Psoas muscle (tissue), 8 donors: ENCODE measurements at regions of chr10 and their contacts with region 1.

Region 1: DNA sequence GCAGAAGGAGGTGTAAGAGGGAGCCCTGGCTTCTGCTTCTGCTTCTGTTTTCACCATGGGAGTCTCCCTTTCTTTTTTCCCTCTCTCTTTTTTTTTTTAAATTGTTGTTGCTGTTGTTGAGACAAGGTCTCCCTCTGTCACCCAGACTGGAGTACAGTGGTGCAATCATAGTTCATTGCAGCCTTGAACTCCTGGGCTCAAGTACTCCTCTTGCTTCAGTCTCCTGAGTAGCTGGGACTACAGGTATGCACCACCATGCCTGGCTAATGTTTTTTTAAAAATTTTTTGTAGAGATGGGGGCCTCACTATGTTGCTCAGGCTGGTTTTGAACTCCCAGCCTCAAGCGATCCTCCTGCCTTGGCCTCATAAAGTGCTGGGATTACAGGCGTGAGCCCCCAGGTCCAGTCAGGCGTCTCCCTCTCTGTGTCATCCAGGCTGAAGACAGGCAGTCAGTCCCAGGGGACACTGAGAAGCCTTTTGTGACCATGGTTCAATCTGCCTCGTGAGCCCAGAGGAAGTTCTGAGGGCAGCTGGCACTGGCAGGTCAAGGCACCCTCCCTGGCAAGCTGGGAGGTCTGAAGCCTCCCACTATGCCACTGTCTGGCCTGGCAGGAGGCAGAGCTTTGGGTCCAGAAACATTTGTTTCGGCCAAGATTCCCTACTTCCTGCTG is 33.6 kb upstream of the NPFFR1 start:
- DNase-seq: no peak
- ATAC-seq: no peak
- H3K4me3 ChIP-seq: no peak overlapping the region
- H3K27ac ChIP-seq: no peak overlapping the region
- H3K4me1 ChIP-seq: no peaks in the 10 kb centered on the region
- H3K27me3 ChIP-seq: no peaks in the 10 kb centered on the region
- CTCF ChIP-seq: no peak

Region 2: GRCh38 chr10:70052462-70053217 is 264.8 kb before region 1 on chr10 and contains the start of gene MACROH2A2:
- intact Hi-C with region 1: no loop called
- DNase-seq: peak; percentile 25 to 68
- ATAC-seq: peak; percentile 84 to 95 (median 90)
- H3K4me3 ChIP-seq: peak within 1 kb of the TSS; percentile 77
- H3K27ac ChIP-seq: peak within 1 kb of the TSS; percentile 54
- H3K4me1 ChIP-seq: peaks cover 5% of the 10 kb centered on the region
- H3K27me3 ChIP-seq: peaks cover 0 to 5% (median 2%) of the 10 kb centered on the region in 3 donors
- CTCF ChIP-seq: peak; percentile 38
- total RNA-seq, gene MACROH2A2: 4.1 to 6.2 (median 5.8) TPM

Region 3: DNA sequence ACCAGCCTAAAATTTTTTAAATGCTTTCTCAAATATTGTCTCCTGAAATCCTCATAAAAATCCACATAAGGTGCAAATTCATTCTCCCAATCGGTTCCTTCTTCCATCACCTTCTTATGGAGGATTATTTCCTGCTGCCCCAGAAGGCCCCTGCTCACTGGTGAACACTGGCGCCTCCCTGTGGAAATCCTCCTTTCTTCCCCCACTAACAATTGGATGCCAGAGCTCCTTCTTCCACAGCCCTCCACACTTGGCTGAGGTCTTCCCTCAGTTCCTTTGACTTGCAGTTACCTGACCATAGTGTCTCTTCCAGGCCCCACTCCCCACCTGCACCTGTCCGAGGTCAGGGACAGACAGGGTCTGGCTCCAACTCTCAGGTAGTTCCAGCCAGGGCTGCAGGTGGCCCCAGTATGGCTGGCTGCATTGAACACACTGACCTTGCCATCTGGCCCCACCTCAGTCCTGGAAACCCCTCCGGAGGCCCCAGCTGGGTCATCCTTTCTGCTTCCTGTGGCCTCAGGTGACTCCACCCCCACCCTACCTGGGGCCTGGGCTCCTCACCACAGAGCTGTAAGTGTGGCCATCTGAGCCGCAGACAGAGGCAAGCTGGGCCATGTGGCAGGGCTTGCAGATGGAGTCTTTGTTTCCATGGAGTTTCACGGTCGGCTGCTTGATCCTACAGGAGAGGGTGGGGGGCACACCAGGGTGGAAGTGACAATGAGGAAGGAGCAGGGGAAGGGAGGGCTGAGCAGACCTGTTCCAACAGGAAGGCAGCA is 1752.5 kb after region 1 on chr10:
- intact Hi-C with region 1: loop called in 1 of 2 experiments (anchors 5 kb)
- DNase-seq: peak in 1 of 2 donors; percentile 23
- ATAC-seq: no peak
- H3K4me3 ChIP-seq: no peak overlapping the region
- H3K27ac ChIP-seq: no peak overlapping the region
- H3K4me1 ChIP-seq: peaks cover 6% of the 10 kb centered on the region
- H3K27me3 ChIP-seq: no peaks in the 10 kb centered on the region
- CTCF ChIP-seq: no peak